Sigmoid colon (tissue), 7 donors: ENCODE measurements at regions of chr19 and their contacts with region 1.

Region 1: GRCh38 chr19:3403489-3404323 is 37.3 kb downstream of the NFIC start:
- DNase-seq: peak; percentile 99
- H3K4me3 ChIP-seq: peak overlapping the region; percentile 37 to 57 (median 48)
- H3K27ac ChIP-seq: peak overlapping the region; percentile 98 to 100 (median 98)
- H3K4me1 ChIP-seq: peaks cover 0 to 97% (median 89%) of the 10 kb centered on the region in 4 donors
- H3K27me3 ChIP-seq: no peaks in the 10 kb centered on the region
- CTCF ChIP-seq: no peak
- EP300 ChIP-seq: peak; percentile 95 to 100 (median 98)
- POLR2A ChIP-seq: no peak

Region 2: DNA sequence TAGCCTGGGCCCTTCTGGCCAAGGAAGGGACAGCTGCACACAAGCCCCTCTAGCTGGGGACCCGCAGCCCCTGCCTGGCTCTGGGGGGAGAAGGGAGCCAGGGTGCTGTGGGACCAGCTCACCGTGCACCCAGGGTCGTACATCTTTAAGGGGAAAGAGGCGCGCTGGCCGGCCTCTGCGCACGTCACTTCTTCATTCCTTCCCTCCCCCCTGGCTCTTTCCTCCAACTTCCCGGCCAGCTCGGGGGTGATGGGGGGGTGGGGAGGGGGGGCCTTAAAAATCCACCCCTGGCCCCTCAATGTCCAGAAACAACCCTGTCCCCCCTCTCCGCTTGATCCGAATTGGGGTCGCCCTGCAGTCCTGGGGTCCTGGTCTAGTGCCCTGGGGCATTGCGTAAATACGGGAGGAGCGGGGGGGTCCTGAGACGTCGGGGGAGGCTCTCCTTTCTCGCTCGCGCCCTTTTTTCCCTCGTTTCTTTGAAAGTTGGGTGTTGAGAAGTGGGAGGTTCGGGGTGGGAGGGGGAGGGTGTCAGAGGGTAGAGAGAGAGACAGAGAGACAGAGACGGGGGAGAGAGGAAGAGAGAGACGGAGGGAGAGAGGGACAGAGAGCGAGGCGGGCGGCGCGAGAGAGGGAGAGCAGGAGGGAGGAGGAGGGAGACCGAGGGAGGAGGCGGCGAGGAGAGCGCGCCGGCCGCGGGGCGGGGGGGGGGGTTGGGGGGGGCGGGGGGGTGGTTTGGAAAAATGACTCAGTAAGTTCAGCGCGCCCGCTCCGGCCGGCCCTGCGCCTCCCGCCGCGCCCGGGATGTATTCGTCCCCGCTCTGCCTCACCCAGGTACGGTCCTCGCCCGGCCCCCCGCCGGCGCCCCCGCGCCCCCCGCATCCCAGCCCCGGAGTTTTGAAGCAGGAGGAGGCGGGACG is 37.6 kb before region 1 on chr19 and contains the start of gene NFIC:
- intact Hi-C with region 1: loop called (anchors 2 kb)
- DNase-seq: peak; percentile 94
- H3K4me3 ChIP-seq: peak within 1 kb of the TSS; percentile 97 to 100 (median 99)
- H3K27ac ChIP-seq: peak within 1 kb of the TSS; percentile 98 to 100 (median 100)
- H3K4me1 ChIP-seq: peaks cover 0 to 71% (median 63%) of the 10 kb centered on the region in 4 donors
- H3K27me3 ChIP-seq: no peaks in the 10 kb centered on the region
- CTCF ChIP-seq: no peak
- EP300 ChIP-seq: peak in 3 of 4 donors; percentile 24 to 75 (median 42)
- POLR2A ChIP-seq: peak in 1 of 2 donors; percentile 12
- total RNA-seq, gene NFIC: 63.2 to 114 (median 74.2) TPM

Region 3: GRCh38 chr19:3387645-3388589 is 15.8 kb before region 1 on chr19:
- intact Hi-C with region 1: loop called (anchors 2 kb)
- DNase-seq: peak; percentile 96
- H3K4me3 ChIP-seq: peak overlapping the region in 3 of 4 donors; percentile 9 to 17 (median 12)
- H3K27ac ChIP-seq: peak overlapping the region; percentile 98 to 100 (median 100)
- H3K4me1 ChIP-seq: peaks cover 0 to 93% (median 87%) of the 10 kb centered on the region in 4 donors
- H3K27me3 ChIP-seq: no peaks in the 10 kb centered on the region
- CTCF ChIP-seq: no peak
- EP300 ChIP-seq: peak in 3 of 4 donors; percentile 39 to 61 (median 47)
- POLR2A ChIP-seq: peak in 1 of 2 donors; percentile 6

Region 4: DNA sequence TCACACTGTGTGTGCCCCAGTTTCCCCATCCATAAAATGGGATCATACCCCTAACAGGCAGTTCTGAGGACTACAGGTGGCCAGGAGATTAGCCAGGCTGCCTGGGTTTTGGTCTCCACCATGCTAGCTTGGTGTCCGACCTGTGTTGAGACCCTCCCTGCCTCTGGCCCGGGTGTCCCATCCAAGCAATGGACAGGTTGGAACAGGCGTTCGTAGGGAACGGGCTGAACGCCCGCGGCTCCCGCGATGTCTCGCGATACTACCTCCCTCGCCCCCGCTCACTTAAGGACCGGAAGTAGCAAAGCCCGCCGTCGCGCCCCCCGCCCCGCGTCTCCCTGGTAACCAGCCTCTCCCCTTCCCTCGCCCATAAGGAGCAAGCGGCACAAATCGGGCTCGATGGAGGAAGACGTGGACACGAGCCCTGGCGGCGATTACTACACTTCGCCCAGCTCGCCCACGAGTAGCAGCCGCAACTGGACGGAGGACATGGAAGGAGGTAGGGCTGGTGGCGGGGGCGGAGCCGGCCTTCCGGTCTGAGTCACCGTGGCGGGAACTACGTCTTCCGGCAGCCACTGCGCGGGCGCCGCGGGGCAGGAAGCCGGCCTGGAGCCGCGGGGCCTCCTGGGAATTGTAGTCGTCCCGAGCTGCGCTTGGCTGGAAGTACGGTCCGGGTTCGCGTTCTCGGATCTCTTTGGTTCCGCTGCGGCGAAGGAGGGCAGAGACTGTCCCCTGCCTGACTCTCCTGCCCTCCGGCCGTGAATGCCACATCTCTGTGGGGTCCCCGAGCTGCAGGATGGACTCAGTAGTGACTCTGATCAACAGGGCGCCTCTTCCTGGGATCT is 31.2 kb after region 1 on chr19:
- intact Hi-C with region 1: no loop called
- DNase-seq: peak; percentile 98
- H3K4me3 ChIP-seq: peak overlapping the region; percentile 20 to 48 (median 38)
- H3K27ac ChIP-seq: peak overlapping the region; percentile 83 to 97 (median 92)
- H3K4me1 ChIP-seq: peaks cover 0 to 61% (median 53%) of the 10 kb centered on the region in 4 donors
- H3K27me3 ChIP-seq: no peaks in the 10 kb centered on the region
- CTCF ChIP-seq: no peak
- EP300 ChIP-seq: peak in 1 of 4 donors; percentile 35
- POLR2A ChIP-seq: no peak

Region 5: GRCh38 chr19:3450796-3451411 is 47.2 kb after region 1 on chr19:
- intact Hi-C with region 1: loop called (anchors 2 kb)
- DNase-seq: peak; percentile 96
- H3K4me3 ChIP-seq: no peak overlapping the region
- H3K27ac ChIP-seq: peak overlapping the region; percentile 80 to 92 (median 86)
- H3K4me1 ChIP-seq: peaks cover 0 to 31% (median 20%) of the 10 kb centered on the region in 4 donors
- H3K27me3 ChIP-seq: no peaks in the 10 kb centered on the region
- CTCF ChIP-seq: no peak
- EP300 ChIP-seq: peak; percentile 96 to 100 (median 98)
- POLR2A ChIP-seq: no peak